Dorsolateral prefrontal cortex (tissue), 120 donors: ENCODE measurements at regions of chr20 and their contacts with region 1.

Region 1: GRCh38 chr20:59603781-59604541 is at the start of gene PHACTR3:
- DNase-seq: peak; percentile 69 to 88 (median 82)
- H3K4me3 ChIP-seq: peak within 1 kb of the TSS; percentile 55 to 90 (median 78)
- H3K27ac ChIP-seq: peak within 1 kb of the TSS; percentile 79 to 99 (median 96)
- H3K27me3 ChIP-seq: peaks cover 0 to 5% (median 0%) of the 10 kb centered on the region in 45 donors
- CTCF ChIP-seq: peak in 4 of 56 donors; percentile 5 to 13 (median 10)
- total RNA-seq, gene PHACTR3: 79.3 to 168 (median 106) TPM

Region 2: DNA sequence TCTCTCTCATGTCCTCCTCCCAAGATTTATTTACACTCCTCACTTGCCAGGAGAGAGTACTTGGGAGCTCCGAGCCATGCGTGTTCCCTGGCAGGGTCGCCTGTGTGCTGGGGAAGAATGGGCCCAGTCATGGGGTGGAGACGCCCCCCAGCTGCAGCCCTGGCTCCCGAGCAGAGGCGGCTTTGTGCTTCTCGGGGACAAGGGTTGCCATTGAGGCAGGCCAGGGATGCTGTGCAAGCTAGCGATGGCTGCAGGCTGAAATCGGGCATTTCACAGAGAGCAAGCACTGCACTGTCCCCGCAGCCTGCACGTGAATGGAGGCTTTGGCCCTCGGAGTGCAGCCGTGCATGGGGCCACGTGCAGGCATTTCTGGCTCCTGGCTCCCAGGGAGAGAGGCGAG is 24.2 kb after region 1 on chr20:
- intact Hi-C with region 1: loop called in 1 of 2 experiments (anchors 2 kb)
- DNase-seq: peak; percentile 43 to 97 (median 94)
- H3K4me3 ChIP-seq: peak overlapping the region in 53 of 59 donors; percentile 11 to 69 (median 43)
- H3K27ac ChIP-seq: peak overlapping the region; percentile 90 to 100 (median 98)
- H3K27me3 ChIP-seq: no peaks in the 10 kb centered on the region
- CTCF ChIP-seq: peak in 50 of 56 donors; percentile 16 to 71 (median 42)

Region 3: GRCh38 chr20:59955132-59955796 is 351.3 kb after region 1 on chr20:
- intact Hi-C with region 1: no loop called
- DNase-seq: no peak
- H3K4me3 ChIP-seq: no peak overlapping the region
- H3K27ac ChIP-seq: peak overlapping the region in 31 of 59 donors; percentile 2 to 68 (median 41)
- H3K27me3 ChIP-seq: no peaks in the 10 kb centered on the region
- CTCF ChIP-seq: peak in 55 of 56 donors; percentile 11 to 76 (median 55)